CD8-positive, alpha-beta memory T cell (primary cell): ENCODE measurements at regions of chr6 and their contacts with region 1.

Region 1: DNA sequence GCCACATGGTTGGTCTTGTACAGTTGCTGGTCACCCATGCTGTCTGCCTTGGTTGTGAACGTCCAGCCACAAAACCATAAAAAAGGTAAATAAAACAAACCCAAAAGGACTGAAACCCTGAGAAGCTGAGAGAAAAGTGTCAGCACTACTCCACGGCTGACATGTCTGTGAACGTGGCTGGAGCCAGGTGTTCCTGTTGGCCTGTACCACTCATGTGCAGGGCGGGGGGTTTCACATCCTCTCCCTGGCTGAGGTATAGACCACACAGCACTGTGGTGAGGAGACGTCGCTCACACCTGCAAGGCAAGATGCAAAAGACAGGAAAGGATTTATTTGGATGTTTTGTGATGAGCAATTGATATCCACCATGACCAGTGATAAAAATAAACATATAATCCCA is 51.9 kb upstream of the MRPS10 start:
- DNase-seq: peak in 3 of 5 donors; percentile 45 to 62 (median 54)
- H3K4me3 ChIP-seq: no peak overlapping the region
- H3K4me3 Mint-ChIP-seq: peak overlapping the region in 2 of 7 donors; percentile 20 to 49
- H3K27ac ChIP-seq: no peak overlapping the region
- H3K27ac Mint-ChIP-seq: peak overlapping the region; percentile 68 to 95 (median 80)
- H3K4me1 ChIP-seq: no peaks in the 10 kb centered on the region
- H3K4me1 Mint-ChIP-seq: peaks cover 25 to 29% (median 26%) of the 10 kb centered on the region in 3 donors
- H3K27me3 ChIP-seq: no peaks in the 10 kb centered on the region
- H3K27me3 Mint-ChIP-seq: peaks cover 0 to 4% of the 10 kb centered on the region in 2 donors

Region 2: GRCh38 chr6:42297661-42298060 is 28.1 kb after region 1 on chr6:
- CTCF ChIA-PET with region 1: no interaction called
- POLR2A ChIA-PET with region 1: interaction called, 12 read pairs
- DNase-seq: no peak
- H3K4me3 ChIP-seq: no peak overlapping the region
- H3K4me3 Mint-ChIP-seq: no peak overlapping the region
- H3K27ac ChIP-seq: no peak overlapping the region
- H3K27ac Mint-ChIP-seq: peak overlapping the region in 5 of 8 donors; percentile 70 to 86 (median 84)
- H3K4me1 ChIP-seq: peaks cover 45% of the 10 kb centered on the region
- H3K4me1 Mint-ChIP-seq: peaks cover 56 to 76% (median 76%) of the 10 kb centered on the region in 3 donors
- H3K27me3 ChIP-seq: no peaks in the 10 kb centered on the region
- H3K27me3 Mint-ChIP-seq: no peaks in the 10 kb centered on the region

Region 3: GRCh38 chr6:42808492-42809483 is 539.2 kb after region 1 on chr6:
- CTCF ChIA-PET with region 1: no interaction called
- POLR2A ChIA-PET with region 1: no interaction called
- DNase-seq: no peak
- H3K4me3 ChIP-seq: no peak overlapping the region
- H3K4me3 Mint-ChIP-seq: no peak overlapping the region
- H3K27ac ChIP-seq: no peak overlapping the region
- H3K27ac Mint-ChIP-seq: peak overlapping the region in 7 of 8 donors; percentile 20 to 92 (median 51)
- H3K4me1 ChIP-seq: no peaks in the 10 kb centered on the region
- H3K4me1 Mint-ChIP-seq: peaks cover 18 to 46% (median 33%) of the 10 kb centered on the region in 3 donors
- H3K27me3 ChIP-seq: no peaks in the 10 kb centered on the region
- H3K27me3 Mint-ChIP-seq: no peaks in the 10 kb centered on the region